K562 (cell line): ENCODE measurements at regions of chr9 and their contacts with region 1.

Region 1: DNA sequence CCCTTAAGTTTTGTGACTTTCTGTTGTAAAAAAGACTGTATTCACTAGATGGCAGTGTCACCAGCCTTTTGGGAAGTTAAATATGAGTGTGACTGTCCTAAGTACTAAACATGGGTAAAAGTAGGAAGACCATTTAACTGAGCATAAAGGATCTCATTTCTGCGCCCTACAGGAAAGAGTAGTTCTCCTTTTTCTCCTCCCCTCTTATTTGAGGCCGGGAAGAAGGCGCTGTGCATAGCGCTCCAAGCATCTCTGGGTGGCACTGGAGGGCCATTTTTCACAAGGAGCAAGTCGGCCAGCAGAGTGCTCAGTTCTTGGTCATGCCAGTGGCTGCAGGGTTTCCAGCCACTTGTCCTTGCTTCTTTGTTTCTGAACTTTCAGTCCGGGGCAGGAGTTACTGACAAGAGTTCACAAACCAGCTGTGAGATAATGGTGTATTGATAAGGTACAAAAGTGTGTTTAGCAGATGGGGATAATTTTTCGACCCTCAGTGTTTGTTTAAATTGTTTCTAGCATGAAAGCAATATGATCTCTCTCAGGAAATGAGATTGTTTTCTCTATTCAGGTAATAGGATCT is 227.6 kb upstream of the DMRT1 start:
- DNase-seq: peak in 3 of 4 experiments; percentile 4 to 38 (median 18)
- ATAC-seq: peak; percentile 93
- H3K4me3 ChIP-seq: no peak overlapping the region
- H3K27ac ChIP-seq: no peak overlapping the region
- H3K4me1 ChIP-seq: no peaks in the 10 kb centered on the region
- H3K27me3 ChIP-seq: no peaks in the 10 kb centered on the region
- CTCF ChIP-seq: peak; percentile 53 to 84 (median 61); a peak in 5 of 6 replicates
- EP300 ChIP-seq: no peak
- POLR2A ChIP-seq: no peak
- RAD21 ChIP-seq: peak; percentile 49 to 71

Region 2: GRCh38 chr9:763692-764524 is 150.0 kb after region 1 on chr9:
- CTCF ChIA-PET with region 1: interaction called, 3 read pairs
- POLR2A ChIA-PET with region 1: no interaction called
- in situ Hi-C with region 1: loop called (anchors 25 kb)
- intact Hi-C with region 1: loop called (anchors 1 kb)
- DNase-seq: peak; percentile 40 to 53 (median 48)
- ATAC-seq: peak; percentile 98
- H3K4me3 ChIP-seq: no peak overlapping the region
- H3K27ac ChIP-seq: no peak overlapping the region
- H3K4me1 ChIP-seq: no peaks in the 10 kb centered on the region
- H3K27me3 ChIP-seq: peaks cover 0 to 7% of the 10 kb centered on the region in 2 experiments; a peak in 1 of 5 replicates
- CTCF ChIP-seq: peak; percentile 61
- EP300 ChIP-seq: no peak
- POLR2A ChIP-seq: no peak
- RAD21 ChIP-seq: peak; percentile 26 to 59; a peak in 3 of 4 replicates

Region 3: DNA sequence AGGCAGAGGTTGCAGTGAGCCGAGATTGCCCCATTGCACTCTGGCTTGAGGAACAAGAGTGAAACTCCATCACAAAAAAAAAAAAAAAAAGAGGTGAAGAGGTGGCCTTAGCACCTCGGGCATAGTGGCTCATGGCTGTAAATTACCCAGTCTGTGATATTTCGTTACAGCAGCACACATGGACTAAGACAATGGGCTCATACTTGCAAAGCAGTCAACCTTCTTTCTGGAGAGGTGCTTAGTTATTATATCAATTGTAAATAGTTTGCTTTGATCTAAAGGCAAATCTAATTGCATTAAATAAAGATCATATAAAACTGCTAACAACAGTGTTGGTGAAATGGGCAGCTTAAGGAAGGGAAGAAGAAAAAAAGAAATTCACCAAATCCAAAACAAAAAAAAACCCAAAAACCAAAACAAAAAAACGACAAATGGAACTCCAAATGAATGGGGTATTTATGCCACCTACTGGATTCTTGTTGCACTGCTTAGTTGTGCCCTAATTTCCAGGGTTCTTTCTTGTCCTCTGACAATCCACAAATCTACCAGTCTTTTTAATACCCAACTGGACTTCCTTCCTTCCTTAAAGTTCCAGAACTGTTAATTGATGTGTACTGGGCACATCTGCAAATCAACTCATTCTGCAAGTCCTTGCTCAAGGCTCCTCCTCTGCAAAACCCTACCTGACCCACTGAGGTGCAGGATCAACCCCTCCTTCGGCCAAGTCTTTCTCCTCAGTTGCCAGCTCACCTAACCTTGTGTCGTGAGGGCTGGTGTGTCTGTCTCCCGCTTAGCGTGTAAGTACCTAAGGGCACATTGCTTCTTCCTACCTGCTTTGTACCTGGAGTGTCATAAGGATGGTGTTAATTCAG is 192.7 kb after region 1 on chr9:
- CTCF ChIA-PET with region 1: interaction called, 3 read pairs
- POLR2A ChIA-PET with region 1: no interaction called
- in situ Hi-C with region 1: no loop called
- intact Hi-C with region 1: loop called (anchors 2 kb)
- DNase-seq: peak in 2 of 4 experiments; percentile 9 to 18
- ATAC-seq: peak; percentile 60
- H3K4me3 ChIP-seq: no peak overlapping the region
- H3K27ac ChIP-seq: no peak overlapping the region
- H3K4me1 ChIP-seq: no peaks in the 10 kb centered on the region
- H3K27me3 ChIP-seq: no peaks in the 10 kb centered on the region; a peak in 1 of 5 replicates
- CTCF ChIP-seq: peak; percentile 39 to 60 (median 51); a peak in 5 of 6 replicates
- EP300 ChIP-seq: no peak
- POLR2A ChIP-seq: no peak
- RAD21 ChIP-seq: peak in 1 of 2 experiments; percentile 65; a peak in 2 of 4 replicates

Region 4: GRCh38 chr9:1009101-1009707 is 395.3 kb after region 1 on chr9:
- CTCF ChIA-PET with region 1: no interaction called
- POLR2A ChIA-PET with region 1: no interaction called
- in situ Hi-C with region 1: no loop called
- intact Hi-C with region 1: loop called (anchors 5 kb)
- DNase-seq: peak; percentile 53 to 72 (median 68)
- ATAC-seq: peak; percentile 99
- H3K4me3 ChIP-seq: no peak overlapping the region
- H3K27ac ChIP-seq: no peak overlapping the region
- H3K4me1 ChIP-seq: no peaks in the 10 kb centered on the region
- H3K27me3 ChIP-seq: no peaks in the 10 kb centered on the region
- CTCF ChIP-seq: peak; percentile 73 to 83 (median 81)
- EP300 ChIP-seq: no peak
- POLR2A ChIP-seq: no peak
- RAD21 ChIP-seq: peak; percentile 68 to 77